ENCODE measurements at regions of chr6 and their contacts with region 1.

Region 1: DNA sequence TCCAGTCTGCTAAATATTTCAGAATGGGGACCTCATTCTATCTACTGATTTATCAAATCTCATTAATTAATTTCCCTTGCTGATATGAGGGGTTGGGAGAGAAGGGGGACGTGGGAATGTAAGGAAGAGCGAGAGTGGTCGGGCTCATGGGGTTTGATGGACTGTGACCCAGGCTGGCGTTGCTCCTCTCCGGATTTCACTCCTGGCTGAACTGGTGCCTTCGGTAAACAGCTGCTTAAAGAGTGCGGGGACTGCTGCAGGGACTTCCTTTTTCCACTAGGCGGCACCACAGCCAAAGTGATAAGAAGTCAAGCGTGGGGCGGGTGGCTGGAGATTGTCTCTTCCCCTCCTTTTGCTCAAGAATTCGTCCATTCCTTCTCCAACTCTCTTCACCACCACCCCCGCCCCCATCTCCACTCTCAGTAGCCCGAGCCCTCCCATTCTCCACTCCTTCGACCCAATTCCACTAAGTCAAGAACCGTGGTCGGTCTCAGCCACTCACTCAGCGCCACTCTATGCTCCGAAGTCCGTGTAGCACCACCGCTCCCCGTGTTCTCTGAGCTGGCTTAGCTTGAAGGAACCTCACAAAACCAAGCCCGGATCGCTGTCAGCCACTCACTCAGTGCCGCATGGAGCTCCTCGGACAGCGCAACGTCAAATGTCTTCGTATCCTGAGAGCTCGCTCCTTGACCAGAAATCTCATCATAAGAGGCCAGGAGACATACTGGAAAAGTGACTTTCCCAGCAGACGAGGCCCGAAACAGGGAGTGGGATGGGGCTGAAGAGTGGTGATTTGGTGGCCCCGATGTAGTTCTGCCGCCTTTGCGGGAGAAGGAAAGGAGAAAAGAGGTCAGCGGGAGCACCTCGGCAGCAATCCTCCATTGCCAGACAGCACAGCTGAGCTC is 9.7 kb downstream of the TRIM31 start:
- DNase-seq: peak; percentile 90
- ATAC-seq: peak; percentile 80
- H3K4me3 Mint-ChIP-seq: peak overlapping the region; percentile 62
- H3K27ac Mint-ChIP-seq: no peak overlapping the region
- H3K4me1 Mint-ChIP-seq: peaks cover 37% of the 10 kb centered on the region
- H3K27me3 Mint-ChIP-seq: peaks cover 65% of the 10 kb centered on the region

Region 2: DNA sequence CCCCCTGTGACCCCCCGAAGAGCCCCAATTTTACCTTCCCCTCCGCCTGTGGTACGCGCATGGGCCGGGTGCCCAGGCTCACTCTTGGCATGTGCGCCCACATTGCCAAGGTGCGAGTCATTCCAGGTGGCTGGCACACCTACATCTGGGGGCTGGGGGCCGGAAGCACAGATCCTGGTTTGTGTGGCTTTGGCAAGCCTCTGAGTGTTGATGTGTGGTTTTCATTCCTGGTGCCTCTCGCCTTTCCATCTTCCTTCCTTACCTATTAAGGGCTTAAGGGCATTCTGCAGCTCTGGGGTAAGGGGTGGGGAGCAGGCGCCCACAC is 27.3 kb before region 1 on chr6:
- CTCF ChIA-PET with region 1: interaction called, 17 read pairs
- DNase-seq: no peak
- ATAC-seq: no peak
- H3K4me3 Mint-ChIP-seq: no peak overlapping the region
- H3K27ac Mint-ChIP-seq: no peak overlapping the region
- H3K4me1 Mint-ChIP-seq: peaks cover 39% of the 10 kb centered on the region
- H3K27me3 Mint-ChIP-seq: peaks cover 85% of the 10 kb centered on the region

Region 3: DNA sequence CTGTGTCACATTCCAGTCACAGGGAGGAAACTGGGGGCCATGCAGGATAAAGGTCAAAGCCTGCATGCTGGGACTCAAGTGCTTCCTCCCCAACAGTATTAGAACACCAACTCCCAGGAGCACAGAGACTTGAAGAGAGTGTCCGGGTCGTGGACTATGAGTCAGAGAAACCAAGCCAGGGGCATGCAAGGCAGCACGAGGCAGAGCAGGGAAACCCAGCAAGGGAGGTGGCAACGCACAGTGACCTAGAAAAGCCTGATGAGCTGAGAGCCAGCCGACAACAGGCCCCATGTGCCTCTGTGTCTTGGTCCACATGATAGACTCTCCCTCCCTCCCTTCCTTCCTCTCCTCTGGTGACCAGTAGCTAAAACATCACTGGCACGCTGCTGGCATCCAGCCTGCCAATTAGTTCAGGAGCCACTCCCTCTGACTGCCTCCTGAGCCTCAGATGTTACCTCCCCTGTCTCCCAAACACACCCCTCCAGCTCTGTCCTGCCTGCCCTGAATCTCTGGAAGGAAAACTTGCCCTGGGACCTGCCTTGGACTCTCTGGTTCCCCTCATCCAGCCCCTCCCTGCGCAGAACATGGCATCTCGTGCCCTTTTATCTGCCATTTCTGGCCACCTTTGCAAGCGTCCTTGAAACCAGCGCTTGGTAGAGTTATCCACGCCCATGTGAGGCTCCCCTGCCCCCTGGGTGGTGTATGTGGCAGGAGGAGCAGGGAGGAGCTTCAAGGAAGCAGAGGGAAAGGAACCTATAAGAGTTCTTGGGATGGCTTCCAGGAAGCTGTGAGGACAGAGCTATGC is 11.4 kb before region 1 on chr6:
- CTCF ChIA-PET with region 1: interaction called, 13 read pairs
- DNase-seq: no peak
- ATAC-seq: no peak
- H3K4me3 Mint-ChIP-seq: no peak overlapping the region
- H3K27ac Mint-ChIP-seq: no peak overlapping the region
- H3K4me1 Mint-ChIP-seq: no peaks in the 10 kb centered on the region
- H3K27me3 Mint-ChIP-seq: peaks cover 80% of the 10 kb centered on the region

Region 4: GRCh38 chr6:30122515-30122914 is 19.3 kb after region 1 on chr6:
- CTCF ChIA-PET with region 1: interaction called, 49 read pairs
- DNase-seq: no peak
- ATAC-seq: no peak
- H3K4me3 Mint-ChIP-seq: no peak overlapping the region
- H3K27ac Mint-ChIP-seq: no peak overlapping the region
- H3K4me1 Mint-ChIP-seq: no peaks in the 10 kb centered on the region
- H3K27me3 Mint-ChIP-seq: peaks cover 52% of the 10 kb centered on the region

Region 5: DNA sequence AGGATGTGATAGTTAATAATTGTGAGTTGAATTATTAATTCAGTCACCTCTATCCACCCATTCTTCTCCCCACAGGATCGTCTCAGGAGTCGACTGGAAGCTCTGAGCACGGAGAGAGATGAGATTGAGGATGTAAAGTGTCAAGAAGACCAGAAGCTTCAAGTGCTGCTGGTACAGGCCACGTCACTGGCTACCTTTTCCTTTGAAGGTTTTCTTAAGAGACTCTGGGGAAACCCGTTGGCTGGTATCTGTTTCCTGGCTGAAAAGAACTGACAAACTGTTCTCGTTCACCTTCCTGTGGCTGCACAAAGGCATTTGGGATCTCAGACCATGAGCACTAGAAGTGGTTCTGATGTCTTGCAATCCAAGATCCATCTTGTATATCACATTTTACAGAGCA is 63.9 kb after region 1 on chr6:
- CTCF ChIA-PET with region 1: interaction called, 24 read pairs
- DNase-seq: no peak
- ATAC-seq: no peak
- H3K4me3 Mint-ChIP-seq: no peak overlapping the region
- H3K27ac Mint-ChIP-seq: no peak overlapping the region
- H3K4me1 Mint-ChIP-seq: peaks cover 33% of the 10 kb centered on the region
- H3K27me3 Mint-ChIP-seq: peaks cover 49% of the 10 kb centered on the region

Region 6: GRCh38 chr6:30600451-30600961 is 497.3 kb after region 1 on chr6:
- CTCF ChIA-PET with region 1: no interaction called
- DNase-seq: no peak
- ATAC-seq: no peak
- H3K4me3 Mint-ChIP-seq: no peak overlapping the region
- H3K27ac Mint-ChIP-seq: no peak overlapping the region
- H3K4me1 Mint-ChIP-seq: peaks cover 12% of the 10 kb centered on the region
- H3K27me3 Mint-ChIP-seq: no peaks in the 10 kb centered on the region

Region 7: DNA sequence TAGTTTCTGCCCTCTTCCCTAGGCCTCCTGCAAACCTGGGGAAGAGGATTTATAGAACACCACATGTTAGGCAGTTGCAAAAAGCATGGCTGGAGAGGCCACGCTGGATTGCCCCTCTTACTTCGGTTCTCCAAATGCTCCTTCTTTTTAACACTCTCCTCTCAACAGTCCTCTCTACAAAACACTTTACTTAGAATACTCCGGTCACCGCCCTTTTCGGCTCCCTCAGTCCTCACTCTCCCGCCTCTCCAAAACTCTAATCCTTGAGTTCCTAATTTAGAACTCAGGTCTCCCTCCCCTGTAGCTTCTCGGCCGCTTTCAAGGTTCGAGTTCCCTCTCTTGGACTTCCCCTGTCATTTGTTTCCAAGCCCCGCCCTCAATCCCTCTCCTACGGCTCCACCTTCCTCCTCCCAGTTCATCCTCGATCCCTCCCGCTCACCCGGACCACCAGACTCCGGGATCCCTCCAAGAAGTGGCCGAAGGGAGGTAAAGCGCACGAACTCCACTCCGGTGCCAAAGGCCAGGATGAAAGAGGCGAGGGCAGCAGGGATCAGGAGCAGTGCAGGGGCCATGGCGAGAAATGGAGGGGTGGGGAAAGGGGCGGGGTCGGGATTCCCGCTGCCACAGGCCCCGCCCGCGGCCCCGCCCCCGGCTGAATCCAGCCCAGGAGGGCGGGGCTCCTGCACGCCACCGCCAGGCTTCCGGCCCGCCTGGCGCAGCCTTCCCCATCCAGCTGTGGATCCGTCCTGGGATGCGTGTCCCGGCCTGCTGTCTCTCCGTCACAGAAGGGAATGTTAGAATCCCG is 587.4 kb after region 1 on chr6 and contains the start of gene NRM:
- CTCF ChIA-PET with region 1: no interaction called
- DNase-seq: peak; percentile 79
- ATAC-seq: peak; percentile 58
- H3K4me3 Mint-ChIP-seq: peak within 1 kb of the TSS; percentile 80
- H3K27ac Mint-ChIP-seq: peak within 1 kb of the TSS; percentile 77
- H3K4me1 Mint-ChIP-seq: peaks cover 40% of the 10 kb centered on the region
- H3K27me3 Mint-ChIP-seq: no peaks in the 10 kb centered on the region
- total RNA-seq, gene NRM: 30.2 to 36.4 TPM